Heart left ventricle (tissue), 16 donors: ENCODE measurements at regions of chr17 and their contacts with region 1.

Region 1: DNA sequence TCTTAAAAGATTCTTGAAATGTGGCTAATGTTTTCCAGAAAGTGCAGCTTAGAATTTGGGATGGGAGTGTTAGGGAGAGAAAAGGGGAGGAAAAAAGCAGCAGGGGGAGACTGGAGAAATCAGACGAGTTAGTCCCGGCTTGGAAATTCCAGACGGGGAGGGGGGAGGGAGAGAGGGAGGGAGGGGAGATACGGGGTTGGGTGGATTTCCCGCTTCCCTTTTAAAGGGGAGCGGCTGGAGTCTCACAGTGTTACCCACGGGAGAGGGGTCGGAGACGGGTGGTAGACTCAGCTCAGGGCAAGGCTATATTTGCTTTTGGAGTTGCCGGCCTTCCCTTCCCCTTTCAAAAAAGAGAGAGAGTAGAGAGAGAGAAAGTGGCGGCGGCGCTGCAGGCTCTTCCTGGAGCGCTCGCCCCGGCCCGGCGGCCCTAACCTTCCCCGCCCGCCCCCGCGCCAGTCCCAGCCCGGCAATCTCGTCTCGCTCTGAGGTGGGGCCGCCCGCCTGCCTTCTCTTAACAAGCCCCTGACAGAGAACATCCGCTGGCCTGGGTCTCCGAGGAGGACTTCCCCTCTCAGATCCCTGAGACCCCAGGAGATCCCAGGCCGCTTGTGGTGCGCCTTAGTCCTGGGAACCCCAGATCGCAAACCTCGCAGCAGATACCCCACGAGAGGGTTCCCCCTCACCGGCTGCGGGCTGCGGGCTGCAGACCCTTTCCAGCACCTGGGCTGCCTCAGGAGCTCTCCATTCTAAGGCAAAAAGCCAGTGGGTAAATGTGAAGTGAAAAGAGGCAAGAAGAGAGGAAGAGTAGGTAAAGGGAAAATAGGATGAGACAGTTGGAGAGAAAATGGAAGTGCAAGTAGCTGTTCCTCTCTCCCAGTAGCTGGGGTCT is 6.7 kb downstream of the IGF2BP1 start:
- DNase-seq: no peak
- ATAC-seq: no peak
- H3K4me3 ChIP-seq: no peak overlapping the region
- H3K27ac ChIP-seq: no peak overlapping the region
- H3K4me1 ChIP-seq: no peaks in the 10 kb centered on the region
- H3K27me3 ChIP-seq: peaks cover 38 to 99% (median 76%) of the 10 kb centered on the region in 9 donors
- CTCF ChIP-seq: no peak
- POLR2A ChIP-seq: no peak

Region 2: GRCh38 chr17:48724251-48725003 is 279.4 kb before region 1 on chr17:
- intact Hi-C with region 1: loop called in 1 of 10 experiments (anchors 10 kb)
- DNase-seq: peak; percentile 77 to 90 (median 83)
- ATAC-seq: peak; percentile 56 to 93 (median 85)
- H3K4me3 ChIP-seq: no peak overlapping the region
- H3K27ac ChIP-seq: no peak overlapping the region
- H3K4me1 ChIP-seq: peaks cover 0 to 40% (median 17%) of the 10 kb centered on the region in 12 donors
- H3K27me3 ChIP-seq: peaks cover 78 to 100% (median 100%) of the 10 kb centered on the region in 9 donors
- CTCF ChIP-seq: peak; percentile 44 to 82 (median 72)
- POLR2A ChIP-seq: no peak

Region 3: GRCh38 chr17:48747445-48748363 is 256.2 kb before region 1 on chr17:
- intact Hi-C with region 1: loop called in 1 of 10 experiments (anchors 10 kb)
- DNase-seq: no peak
- ATAC-seq: no peak
- H3K4me3 ChIP-seq: no peak overlapping the region
- H3K27ac ChIP-seq: no peak overlapping the region
- H3K4me1 ChIP-seq: no peaks in the 10 kb centered on the region
- H3K27me3 ChIP-seq: peaks cover 72 to 99% (median 98%) of the 10 kb centered on the region in 9 donors
- CTCF ChIP-seq: no peak
- POLR2A ChIP-seq: no peak